HEK293 (cell line): ENCODE measurements at regions of chr12 and their contacts with region 1.

Region 1: DNA sequence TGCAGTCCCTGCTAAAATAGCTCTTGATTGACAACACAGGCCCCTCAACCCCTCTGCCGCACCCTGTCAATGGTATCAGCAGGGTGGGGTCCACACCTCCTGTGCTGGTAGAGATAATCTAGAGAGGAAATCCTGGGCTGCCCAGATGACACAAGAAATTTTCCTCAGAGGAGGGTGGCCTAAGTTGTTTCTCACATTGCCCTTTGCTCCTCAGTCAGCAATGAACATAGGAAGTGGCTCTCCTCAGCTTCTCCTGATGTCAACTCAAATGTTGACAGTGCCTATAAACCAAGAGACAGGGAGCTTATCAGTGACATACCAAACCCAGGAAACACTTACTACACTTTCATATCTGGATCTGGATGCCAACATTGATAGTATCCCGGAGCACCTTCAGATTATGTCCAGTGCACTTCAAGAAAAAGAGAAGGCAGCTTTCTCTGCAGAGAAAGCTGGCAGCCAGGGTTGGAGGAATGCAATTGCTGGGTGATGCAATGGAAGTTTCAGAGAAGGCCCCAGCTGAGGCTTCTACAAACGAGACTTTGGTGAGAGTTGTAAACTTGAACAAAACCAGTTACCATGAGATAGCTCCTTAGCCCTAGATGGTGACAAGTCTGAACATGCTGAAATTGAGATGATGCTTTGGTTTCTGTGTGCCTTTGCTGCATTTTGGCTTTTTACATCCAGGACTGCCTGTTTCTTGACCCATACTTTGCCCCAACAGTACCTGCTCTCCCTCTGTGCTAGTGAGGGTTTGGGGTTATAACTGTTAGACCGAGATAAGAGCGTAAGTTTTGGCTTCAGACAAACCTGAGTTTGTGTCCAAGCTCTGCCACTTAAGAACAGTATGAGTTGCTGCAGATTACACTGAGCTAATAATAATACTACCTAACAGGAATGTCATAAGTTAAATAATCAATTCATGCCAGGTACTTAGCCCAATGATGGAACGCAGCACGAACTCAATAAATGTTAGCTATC is 183.5 kb downstream of the NUAK1 start:
- H3K4me3 ChIP-seq: no peak overlapping the region
- H3K27ac ChIP-seq: no peak overlapping the region
- H3K4me1 ChIP-seq: no peaks in the 10 kb centered on the region
- CTCF ChIP-seq: no peak

Region 2: DNA sequence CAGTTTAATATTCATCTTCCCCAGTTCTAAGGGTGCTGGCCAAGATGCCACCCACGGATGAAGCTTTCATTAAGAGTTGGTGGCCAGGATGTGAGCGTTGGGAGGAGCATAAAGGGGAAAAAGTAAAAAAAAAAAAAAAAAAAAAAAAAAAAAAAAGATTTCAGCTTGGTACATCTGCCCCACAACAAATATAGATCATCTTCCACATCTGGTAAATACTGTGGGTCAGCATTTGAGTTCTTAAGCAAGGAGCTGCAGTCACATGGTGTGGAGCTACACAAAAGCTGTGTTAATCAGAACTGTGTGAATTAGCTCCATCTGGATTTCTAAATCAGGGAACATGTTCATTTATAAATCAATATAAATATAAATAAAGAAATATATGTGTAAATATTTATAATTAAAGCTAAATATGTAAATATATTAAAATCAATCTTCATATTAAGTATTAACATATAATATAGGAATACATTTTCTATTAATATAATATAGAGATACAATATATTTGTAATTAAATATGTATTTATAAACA is 78.8 kb before region 1 on chr12:
- CTCF ChIA-PET with region 1: no interaction called
- POLR2A ChIA-PET with region 1: interaction called, 12 read pairs
- H3K4me3 ChIP-seq: no peak overlapping the region
- H3K27ac ChIP-seq: no peak overlapping the region
- H3K4me1 ChIP-seq: no peaks in the 10 kb centered on the region
- CTCF ChIP-seq: no peak

Region 3: GRCh38 chr12:105888696-105889095 is 66.5 kb before region 1 on chr12:
- CTCF ChIA-PET with region 1: no interaction called
- POLR2A ChIA-PET with region 1: no interaction called
- H3K4me3 ChIP-seq: no peak overlapping the region
- H3K27ac ChIP-seq: no peak overlapping the region
- H3K4me1 ChIP-seq: no peaks in the 10 kb centered on the region
- CTCF ChIP-seq: no peak